Left cardiac atrium (tissue), 4 donors: ENCODE measurements at regions of chr22 and their contacts with region 1.

Region 1: DNA sequence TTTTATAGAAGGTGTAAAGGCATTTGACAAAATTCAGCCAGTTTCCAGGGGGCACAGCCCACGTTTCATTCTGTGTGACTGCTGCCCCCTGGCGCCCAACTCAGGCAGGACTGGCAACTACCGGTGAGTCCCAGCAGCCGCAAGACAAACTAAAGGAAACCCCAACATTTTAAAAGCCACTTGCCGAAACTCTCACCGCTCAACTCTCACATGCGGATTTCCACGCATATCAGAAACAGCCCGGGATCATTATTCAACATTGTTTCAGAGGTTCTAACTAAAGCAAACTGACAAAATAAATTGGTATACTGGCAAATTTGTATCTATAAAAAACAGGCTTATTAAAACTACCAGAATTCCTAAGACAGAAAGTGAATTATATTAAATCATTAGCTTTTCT is 48.2 kb downstream of the MORC2 start:
- DNase-seq: peak; percentile 83
- ATAC-seq: peak; percentile 71

Region 2: GRCh38 chr22:30763815-30764686 is 156.4 kb before region 1 on chr22:
- intact Hi-C with region 1: loop called (anchors 2 kb)
- DNase-seq: peak; percentile 31
- ATAC-seq: peak; percentile 68 to 83

Region 3: GRCh38 chr22:30843245-30843644 is 77.2 kb before region 1 on chr22:
- intact Hi-C with region 1: no loop called
- DNase-seq: no peak
- ATAC-seq: no peak

Region 4: GRCh38 chr22:31001124-31001770 is 80.8 kb after region 1 on chr22:
- intact Hi-C with region 1: no loop called
- DNase-seq: no peak
- ATAC-seq: no peak